ENCODE measurements at regions of chr16 and their contacts with region 1.

Region 1: GRCh38 chr16:11139326-11140097 is 116.5 kb downstream of the SOCS1 start:
- DNase-seq: peak; percentile 96
- ATAC-seq: peak; percentile 88
- H3K4me3 ChIP-seq: peak overlapping the region in 1 of 3 experiments; percentile 1; a peak in 1 of 6 replicates
- H3K27ac ChIP-seq: peak overlapping the region; percentile 14
- H3K4me1 ChIP-seq: peaks cover 37% of the 10 kb centered on the region
- H3K27me3 ChIP-seq: no peaks in the 10 kb centered on the region
- CTCF ChIP-seq: no peak
- EP300 ChIP-seq: peak; percentile 82 to 91
- POLR2A ChIP-seq: no peak
- RAD21 ChIP-seq: peak; percentile 9; the same call in 1 of the 2 replicates

Region 2: GRCh38 chr16:11105038-11105903 is 34.2 kb before region 1 on chr16:
- CTCF ChIA-PET with region 1: no interaction called
- POLR2A ChIA-PET with region 1: no interaction called
- in situ Hi-C with region 1: no loop called
- intact Hi-C with region 1: loop called (anchors 1 kb)
- DNase-seq: peak; percentile 90
- ATAC-seq: peak; percentile 78
- H3K4me3 ChIP-seq: no peak overlapping the region
- H3K27ac ChIP-seq: no peak overlapping the region
- H3K4me1 ChIP-seq: peaks cover 45% of the 10 kb centered on the region
- H3K27me3 ChIP-seq: no peaks in the 10 kb centered on the region
- CTCF ChIP-seq: no peak
- EP300 ChIP-seq: 0 out of 4 replicates have a peak, but pooled peaks of 1 of the 2 experiments have one; percentile 13
- POLR2A ChIP-seq: no peak
- RAD21 ChIP-seq: no peak

Region 3: GRCh38 chr16:11205754-11206581 is 66.5 kb after region 1 on chr16:
- CTCF ChIA-PET with region 1: no interaction called
- POLR2A ChIA-PET with region 1: interaction called, 14 read pairs
- in situ Hi-C with region 1: no loop called
- intact Hi-C with region 1: no loop called
- DNase-seq: peak; percentile 53
- ATAC-seq: peak; percentile 73
- H3K4me3 ChIP-seq: peak overlapping the region in 1 of 3 experiments; percentile 38; a peak in 2 of 6 replicates
- H3K27ac ChIP-seq: no peak overlapping the region
- H3K4me1 ChIP-seq: peaks cover 46% of the 10 kb centered on the region
- H3K27me3 ChIP-seq: peaks cover 4 to 47% of the 10 kb centered on the region in 2 experiments
- CTCF ChIP-seq: 0 out of 2 replicates have a peak, but pooled peaks have one; percentile 1
- EP300 ChIP-seq: peak in 1 of 2 experiments; percentile 7; a peak in 1 of 4 replicates
- POLR2A ChIP-seq: no peak
- RAD21 ChIP-seq: no peak; the same call in 1 of the 2 replicates

Measured in HepG2 (cell line).